AG04450 (cell line): ENCODE measurements at regions of chr11 and their contacts with region 1.

Region 1: DNA sequence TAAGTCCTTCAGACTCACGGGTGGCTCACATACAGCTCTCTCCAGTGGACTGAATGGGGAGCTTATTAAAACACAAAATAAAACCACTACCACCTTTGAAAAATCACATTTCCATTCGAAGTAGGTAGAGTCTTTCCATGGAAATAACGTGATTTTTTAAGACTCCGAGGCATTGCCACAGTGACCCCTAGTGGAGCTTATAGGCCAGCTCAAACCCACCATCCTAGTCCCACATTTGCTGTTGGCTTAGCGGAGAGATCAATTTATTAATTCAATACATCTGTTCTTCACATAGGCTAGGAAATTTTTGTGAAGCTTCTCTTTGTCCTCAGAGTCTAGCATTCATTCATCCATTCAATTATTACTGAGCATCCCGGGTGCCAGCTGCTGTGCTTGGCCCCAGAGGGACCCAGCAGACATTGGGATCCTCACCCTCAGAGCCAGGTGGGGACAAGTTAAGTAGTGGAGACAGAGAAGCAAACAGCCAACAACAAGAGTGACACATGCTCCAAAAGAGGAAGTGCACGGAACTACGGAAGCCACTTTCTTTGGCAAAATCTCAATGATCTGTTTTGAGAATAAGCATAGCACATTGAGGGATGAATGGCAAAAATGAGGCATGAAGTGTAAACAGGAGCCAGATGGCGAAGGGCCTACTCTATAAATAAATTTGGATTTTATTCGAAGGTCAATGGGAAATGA is 10.2 kb upstream of the P4HA3 start:
- DNase-seq: no peak
- H3K4me3 ChIP-seq: no peak overlapping the region
- H3K27ac ChIP-seq: no peak overlapping the region
- H3K27me3 ChIP-seq: no peaks in the 10 kb centered on the region
- CTCF ChIP-seq: peak; percentile 68

Region 2: GRCh38 chr11:74311352-74311926 is 10.2 kb before region 1 on chr11 and contains the start of gene P4HA3:
- CTCF ChIA-PET with region 1: interaction called, 11 read pairs
- POLR2A ChIA-PET with region 1: no interaction called
- DNase-seq: no peak
- H3K4me3 ChIP-seq: peak within 1 kb of the TSS; percentile 64
- H3K27ac ChIP-seq: no peak within 1 kb of the TSS
- H3K27me3 ChIP-seq: no peaks in the 10 kb centered on the region
- CTCF ChIP-seq: no peak
- polyA plus RNA-seq, gene P4HA3: 8.5 and 10.7 TPM in 2 replicates